ENCODE measurements at regions of chr18 and their contacts with region 1.

Region 1: DNA sequence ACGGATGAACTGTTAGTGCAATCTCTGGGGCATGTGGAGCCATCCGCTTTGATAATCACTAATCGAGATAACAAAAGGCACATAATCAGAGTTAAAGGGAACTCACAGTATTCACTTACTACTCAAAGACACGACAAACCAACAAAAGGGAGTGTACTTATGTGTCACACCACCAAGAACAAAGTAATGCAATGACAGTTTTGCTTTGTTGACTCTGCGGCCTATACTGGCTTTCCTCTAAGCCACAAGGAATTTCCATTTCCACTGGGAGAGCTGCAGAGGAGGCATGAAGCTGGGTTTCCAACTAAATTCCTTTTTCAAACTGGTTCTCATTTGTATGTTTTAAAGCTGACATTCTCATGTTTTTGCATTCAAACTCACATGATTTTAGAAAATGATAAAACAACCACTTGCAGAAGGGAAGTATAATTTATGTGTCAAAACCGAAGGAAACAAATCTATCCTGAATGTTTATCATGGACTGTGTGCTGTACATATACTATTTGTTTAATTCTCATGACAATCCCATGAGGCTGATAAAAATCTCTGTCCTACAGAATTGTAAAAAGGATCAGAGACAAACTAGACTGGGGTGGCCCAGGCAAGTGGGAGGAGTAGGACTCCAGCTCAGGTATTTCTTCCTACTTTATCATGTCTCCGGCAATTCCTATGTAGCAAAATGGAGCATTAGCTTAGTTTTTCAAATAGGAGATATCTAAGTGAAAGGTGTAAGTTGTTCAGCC is 149.6 kb upstream of the SMAD7 start:
- DNase-seq: peak; percentile 42
- H3K4me3 ChIP-seq: no peak overlapping the region
- H3K4me3 Mint-ChIP-seq: peak overlapping the region; percentile 33
- H3K27ac Mint-ChIP-seq: peak overlapping the region; percentile 48
- H3K4me1 ChIP-seq: peaks cover 22% of the 10 kb centered on the region
- H3K4me1 Mint-ChIP-seq: no peaks in the 10 kb centered on the region
- H3K27me3 ChIP-seq: no peaks in the 10 kb centered on the region
- H3K27me3 Mint-ChIP-seq: no peaks in the 10 kb centered on the region
- CTCF ChIP-seq: no peak

Region 2: DNA sequence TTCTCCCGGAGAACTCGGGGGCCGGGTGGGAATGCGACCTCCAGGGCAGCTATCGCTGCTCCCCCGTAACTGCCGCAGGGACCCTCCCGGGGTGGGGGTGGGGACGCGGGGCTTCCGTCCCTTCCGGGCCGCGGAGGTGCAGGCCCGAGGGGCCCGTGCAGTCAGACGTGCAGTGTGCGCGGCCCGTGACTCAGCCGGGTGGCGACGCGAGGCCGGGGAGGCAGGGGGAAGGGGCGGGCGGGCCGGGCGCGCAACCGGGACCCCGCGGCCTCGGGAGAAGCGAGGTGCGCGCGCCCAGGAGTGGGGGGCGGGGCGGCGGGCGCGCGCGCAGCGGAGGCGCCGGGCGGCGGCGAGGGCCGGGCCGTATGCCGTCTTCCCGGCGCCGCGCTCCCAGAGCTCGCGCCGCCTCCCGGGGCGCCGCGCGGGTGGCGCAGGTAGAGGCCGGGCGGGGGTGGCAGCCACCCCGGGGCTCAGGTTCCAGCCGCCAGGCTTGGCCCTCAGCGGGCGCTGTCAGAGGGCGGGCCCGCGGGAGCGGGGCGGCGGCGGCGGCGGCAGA is 124.7 kb before region 1 on chr18:
- CTCF ChIA-PET with region 1: no interaction called
- POLR2A ChIA-PET with region 1: no interaction called
- intact Hi-C with region 1: no loop called
- DNase-seq: peak in 1 of 2 experiments; percentile 57
- H3K4me3 ChIP-seq: peak overlapping the region; percentile 44
- H3K4me3 Mint-ChIP-seq: no peak overlapping the region
- H3K27ac Mint-ChIP-seq: no peak overlapping the region
- H3K4me1 ChIP-seq: peaks cover 6% of the 10 kb centered on the region
- H3K4me1 Mint-ChIP-seq: no peaks in the 10 kb centered on the region
- H3K27me3 ChIP-seq: no peaks in the 10 kb centered on the region
- H3K27me3 Mint-ChIP-seq: no peaks in the 10 kb centered on the region
- CTCF ChIP-seq: no peak

Region 3: GRCh38 chr18:49071317-49071716 is 29.1 kb before region 1 on chr18:
- CTCF ChIA-PET with region 1: interaction called, 3 read pairs
- POLR2A ChIA-PET with region 1: no interaction called
- intact Hi-C with region 1: loop called (anchors 2 kb)
- DNase-seq: no peak
- H3K4me3 ChIP-seq: no peak overlapping the region
- H3K4me3 Mint-ChIP-seq: no peak overlapping the region
- H3K27ac Mint-ChIP-seq: no peak overlapping the region
- H3K4me1 ChIP-seq: 0 out of 2 replicates have a peak, but pooled peaks cover 4% of the 10 kb centered on the region
- H3K4me1 Mint-ChIP-seq: peaks cover 6% of the 10 kb centered on the region
- H3K27me3 ChIP-seq: no peaks in the 10 kb centered on the region
- H3K27me3 Mint-ChIP-seq: no peaks in the 10 kb centered on the region
- CTCF ChIP-seq: no peak